Activated naive CD4-positive, alpha-beta T cell treated with anti-CD3 and anti-CD28 coated beads, Interleukin-2, amount 10 ng/mL, durations not matched to agents 7 days and 5 days (primary cell): ENCODE measurements at regions of chr19 and their contacts with region 1.

Region 1: GRCh38 chr19:45125926-45126493 is 33.0 kb downstream of the PPP1R37 start:
- DNase-seq: peak; percentile 85
- H3K4me3 Mint-ChIP-seq: no peak overlapping the region
- H3K27ac Mint-ChIP-seq: no peak overlapping the region
- H3K4me1 Mint-ChIP-seq: peaks cover 20% of the 10 kb centered on the region
- H3K27me3 Mint-ChIP-seq: no peaks in the 10 kb centered on the region

Region 2: DNA sequence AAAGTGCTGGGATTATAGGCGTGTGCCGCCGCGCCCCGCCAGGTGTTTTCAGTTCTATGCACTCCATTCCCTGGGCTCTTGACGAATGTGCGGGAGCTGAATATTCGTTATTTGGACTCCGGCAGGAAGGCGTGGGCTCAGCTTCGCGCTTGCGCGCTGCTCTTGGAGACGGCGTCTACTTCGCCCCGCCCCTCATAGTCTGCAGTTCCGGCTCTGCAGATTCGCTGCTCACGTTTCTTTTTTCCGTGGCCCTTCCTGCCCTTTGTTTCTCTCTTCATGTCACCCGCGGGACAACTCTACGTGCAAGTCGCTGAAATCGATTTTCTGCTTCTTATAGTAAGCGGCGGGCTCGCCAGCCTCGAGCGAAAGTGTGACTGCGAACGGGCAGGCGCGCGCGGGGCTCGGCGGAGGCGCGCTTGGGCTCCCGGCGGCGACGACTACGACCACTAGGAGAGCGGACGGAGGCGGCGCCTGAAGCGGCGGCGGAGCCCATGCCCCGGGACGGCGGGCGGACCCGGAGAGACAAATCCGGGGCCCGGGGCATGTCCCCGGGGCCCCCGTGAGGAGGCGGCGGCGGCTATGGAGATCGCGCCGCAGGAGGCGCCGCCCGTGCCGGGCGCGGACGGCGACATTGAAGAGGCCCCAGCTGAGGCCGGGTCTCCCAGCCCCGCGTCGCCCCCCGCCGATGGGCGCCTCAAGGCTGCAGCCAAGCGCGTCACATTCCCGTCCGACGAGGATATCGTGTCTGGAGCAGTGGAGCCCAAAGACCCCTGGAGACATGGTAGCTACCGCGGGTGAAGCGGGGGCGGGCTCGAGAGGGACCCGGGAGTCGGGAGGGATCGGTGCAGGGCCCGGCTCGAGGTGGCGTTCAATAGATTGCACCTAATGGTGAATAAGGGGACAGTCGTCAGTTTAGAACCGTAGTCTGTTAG is 33.0 kb before region 1 on chr19 and contains the start of gene PPP1R37:
- CTCF ChIA-PET with region 1: interaction called, 14 read pairs
- DNase-seq: peak; percentile 94
- H3K4me3 Mint-ChIP-seq: peak within 1 kb of the TSS; percentile 91
- H3K27ac Mint-ChIP-seq: peak within 1 kb of the TSS; percentile 97
- H3K4me1 Mint-ChIP-seq: peaks cover 66% of the 10 kb centered on the region
- H3K27me3 Mint-ChIP-seq: no peaks in the 10 kb centered on the region

Region 3: DNA sequence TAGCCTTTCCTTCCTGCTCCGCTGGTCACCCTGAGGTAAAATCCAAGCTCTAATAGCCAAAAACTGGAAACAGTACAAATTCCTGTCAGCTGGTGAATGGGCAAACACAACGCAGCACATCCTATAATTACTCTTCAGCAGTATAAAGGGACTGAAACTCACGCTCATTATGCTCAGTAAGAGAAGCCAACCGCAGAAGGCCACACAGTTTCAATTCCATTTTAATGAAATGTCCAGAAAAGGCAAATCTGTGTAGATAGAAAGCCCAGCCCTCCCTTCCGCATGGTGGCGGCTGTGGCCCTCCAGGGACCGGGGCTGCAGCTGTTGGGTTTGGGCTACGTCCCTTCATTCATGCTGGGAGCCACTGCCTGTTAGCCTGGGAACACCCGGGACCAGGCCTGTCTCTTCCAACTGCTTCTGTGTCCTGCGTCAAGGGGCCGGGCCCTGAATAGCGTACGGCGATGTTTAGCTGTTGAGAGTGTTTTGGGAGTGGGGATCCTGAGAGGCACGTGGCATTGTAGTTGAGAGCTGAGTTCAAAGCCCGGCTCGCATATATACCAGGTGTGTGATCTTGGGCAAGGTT is 11.3 kb after region 1 on chr19:
- CTCF ChIA-PET with region 1: interaction called, 12 read pairs
- DNase-seq: no peak
- H3K4me3 Mint-ChIP-seq: no peak overlapping the region
- H3K27ac Mint-ChIP-seq: peak overlapping the region; percentile 13
- H3K4me1 Mint-ChIP-seq: no peaks in the 10 kb centered on the region
- H3K27me3 Mint-ChIP-seq: no peaks in the 10 kb centered on the region

Region 4: DNA sequence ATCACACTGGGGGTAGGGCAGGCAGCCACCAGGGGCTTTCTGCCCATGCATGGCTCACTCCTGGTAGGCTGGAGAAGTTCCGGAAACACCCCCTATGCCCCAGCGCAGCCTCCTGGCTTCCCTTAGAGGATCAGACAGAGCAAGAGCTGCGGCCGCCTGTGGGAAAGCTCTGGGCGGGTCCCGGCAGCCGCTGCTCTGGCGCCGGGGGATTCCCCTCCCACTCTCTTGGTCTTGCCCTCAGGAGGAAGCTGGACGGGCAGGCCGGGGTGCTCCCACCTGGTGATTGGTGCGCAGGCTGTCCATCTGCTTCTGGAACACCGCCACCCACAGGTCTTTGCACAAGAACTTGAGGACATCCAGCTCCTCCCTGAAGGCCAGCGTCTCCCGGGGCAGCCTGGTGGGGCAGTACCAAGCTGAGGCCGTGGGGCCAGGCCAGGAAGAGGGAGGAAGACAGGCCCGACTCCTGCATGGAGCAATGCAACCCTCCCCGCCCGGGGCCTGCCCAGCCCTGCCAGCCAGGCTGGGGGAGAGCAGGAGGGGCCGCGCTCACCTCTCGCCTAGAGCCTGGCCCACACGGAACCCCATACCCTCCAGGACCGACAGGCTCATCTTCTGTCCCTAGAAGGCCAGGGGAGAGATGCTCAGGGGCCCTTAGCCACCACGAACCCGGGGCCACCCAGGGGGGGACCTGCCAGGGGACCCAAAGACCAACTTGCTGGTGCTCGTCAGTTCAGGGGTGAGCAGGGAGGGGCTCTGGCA is 38.7 kb after region 1 on chr19:
- CTCF ChIA-PET with region 1: no interaction called
- DNase-seq: peak; percentile 75
- H3K4me3 Mint-ChIP-seq: no peak overlapping the region
- H3K27ac Mint-ChIP-seq: peak overlapping the region; percentile 42
- H3K4me1 Mint-ChIP-seq: peaks cover 43% of the 10 kb centered on the region
- H3K27me3 Mint-ChIP-seq: peaks cover 26% of the 10 kb centered on the region

Region 5: GRCh38 chr19:45211751-45212381 is 85.9 kb after region 1 on chr19:
- CTCF ChIA-PET with region 1: no interaction called
- DNase-seq: no peak
- H3K4me3 Mint-ChIP-seq: no peak overlapping the region
- H3K27ac Mint-ChIP-seq: no peak overlapping the region
- H3K4me1 Mint-ChIP-seq: peaks cover 7% of the 10 kb centered on the region
- H3K27me3 Mint-ChIP-seq: peaks cover 65% of the 10 kb centered on the region